Calu3 (cell line): ENCODE measurements at regions of chr11 and their contacts with region 1.

Region 1: DNA sequence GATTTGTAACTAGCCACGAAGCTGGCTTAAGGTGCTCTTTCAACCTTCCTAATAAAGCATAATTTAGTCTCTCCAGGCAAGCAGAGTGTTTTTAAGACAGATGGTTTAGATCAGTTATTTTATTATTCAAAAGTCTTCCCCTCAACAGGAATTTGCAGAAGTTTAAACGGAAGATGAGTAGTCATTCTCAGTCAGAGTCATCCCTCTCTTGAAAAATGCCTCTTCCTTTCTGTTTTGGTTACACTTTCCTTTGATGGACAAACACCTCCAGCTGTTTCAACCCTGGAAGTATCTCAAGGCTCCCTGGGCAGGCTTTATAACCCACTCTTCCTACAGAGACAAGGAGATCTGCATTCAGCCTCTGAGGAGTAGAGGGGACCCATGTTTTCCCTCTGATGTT is 60.3 kb upstream of the POU2AF2 start:
- DNase-seq: no peak
- H3K4me3 Mint-ChIP-seq: no peak overlapping the region
- H3K27ac Mint-ChIP-seq: no peak overlapping the region
- H3K4me1 Mint-ChIP-seq: no peaks in the 10 kb centered on the region
- H3K27me3 Mint-ChIP-seq: no peaks in the 10 kb centered on the region
- CTCF ChIP-seq: no peak

Region 2: GRCh38 chr11:112364962-112365481 is 1179.8 kb after region 1 on chr11:
- CTCF ChIA-PET with region 1: interaction called, 15 read pairs
- intact Hi-C with region 1: no loop called
- DNase-seq: no peak
- H3K4me3 Mint-ChIP-seq: no peak overlapping the region
- H3K27ac Mint-ChIP-seq: no peak overlapping the region
- H3K4me1 Mint-ChIP-seq: no peaks in the 10 kb centered on the region
- H3K27me3 Mint-ChIP-seq: no peaks in the 10 kb centered on the region
- CTCF ChIP-seq: no peak